GM10248 (cell line): ENCODE measurements at regions of chr6 and their contacts with region 1.

Region 1: DNA sequence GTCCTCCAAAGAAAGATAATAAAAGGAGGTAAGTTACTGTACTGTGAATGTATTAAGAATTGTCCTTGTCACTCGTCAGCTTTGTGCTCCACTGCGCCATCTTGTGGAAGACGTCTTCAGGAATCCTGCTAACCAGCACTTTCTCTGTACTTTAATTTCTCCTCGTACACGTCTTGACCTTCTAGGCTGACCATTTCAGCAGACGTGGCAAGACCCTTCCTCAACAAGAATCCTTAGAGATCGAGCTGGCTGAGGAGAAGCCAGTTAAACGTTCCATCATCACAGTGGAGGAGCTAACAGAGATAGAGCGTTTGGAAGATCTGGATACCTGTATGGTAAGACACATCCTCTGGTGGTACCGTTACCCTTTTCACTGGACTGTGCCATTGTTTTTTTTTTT is 95.5 kb upstream of the SCGN start:
- DNase-seq: peak; percentile 56
- CTCF ChIP-seq: peak; percentile 88

Region 2: GRCh38 chr6:25223490-25223991 is 333.0 kb before region 1 on chr6:
- CTCF ChIA-PET with region 1: interaction called, 32 read pairs
- POLR2A ChIA-PET with region 1: no interaction called
- DNase-seq: peak; percentile 62
- CTCF ChIP-seq: peak; percentile 92

Region 3: GRCh38 chr6:25270559-25270958 is 286.0 kb before region 1 on chr6:
- CTCF ChIA-PET with region 1: interaction called, 60 read pairs
- POLR2A ChIA-PET with region 1: no interaction called
- DNase-seq: no peak
- CTCF ChIP-seq: no peak

Region 4: GRCh38 chr6:25278914-25279747 is 277.4 kb before region 1 on chr6 and contains the start of gene CARMIL1:
- CTCF ChIA-PET with region 1: interaction called, 14 read pairs
- POLR2A ChIA-PET with region 1: no interaction called
- DNase-seq: peak; percentile 90
- CTCF ChIP-seq: peak; percentile 62

Region 5: DNA sequence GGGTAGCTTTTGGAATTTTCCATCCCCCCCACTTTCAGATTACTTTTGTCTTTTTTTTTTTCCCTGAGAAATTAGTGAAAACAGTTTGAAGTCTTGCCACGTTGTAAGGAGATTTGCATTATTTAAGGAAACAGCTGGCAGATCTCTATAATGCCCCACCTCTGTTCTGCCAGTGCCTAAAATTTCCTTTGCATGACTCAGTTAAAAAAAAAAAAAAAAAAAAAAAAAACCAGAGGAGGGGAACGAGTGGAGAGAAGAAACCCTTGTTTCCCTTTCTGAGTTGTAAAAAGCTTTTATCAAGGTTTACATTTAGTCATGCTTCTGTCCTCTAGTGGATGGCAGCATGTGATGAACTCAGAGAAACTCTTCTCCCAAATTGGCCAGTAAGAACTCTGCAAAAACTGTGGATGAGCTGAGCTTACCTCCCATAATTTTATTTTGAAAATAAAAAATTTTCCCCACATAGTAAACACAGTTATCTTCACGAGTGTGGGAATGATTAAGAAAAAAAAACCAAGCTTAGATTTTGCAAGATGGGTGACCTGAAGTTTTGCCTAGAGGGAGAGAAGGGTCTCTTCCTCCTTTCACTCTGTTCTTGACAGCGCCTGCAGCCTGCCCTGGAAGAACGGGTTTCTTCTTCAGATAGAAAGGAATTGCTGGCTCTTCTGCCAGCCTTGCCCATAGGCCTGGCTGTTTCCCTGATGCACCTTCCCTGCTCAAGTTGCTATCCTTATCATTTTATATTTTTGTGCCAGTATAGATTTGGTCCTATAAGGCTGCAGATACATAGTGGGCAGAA is 243.6 kb before region 1 on chr6:
- CTCF ChIA-PET with region 1: no interaction called
- POLR2A ChIA-PET with region 1: no interaction called
- DNase-seq: no peak
- CTCF ChIP-seq: no peak

Region 6: DNA sequence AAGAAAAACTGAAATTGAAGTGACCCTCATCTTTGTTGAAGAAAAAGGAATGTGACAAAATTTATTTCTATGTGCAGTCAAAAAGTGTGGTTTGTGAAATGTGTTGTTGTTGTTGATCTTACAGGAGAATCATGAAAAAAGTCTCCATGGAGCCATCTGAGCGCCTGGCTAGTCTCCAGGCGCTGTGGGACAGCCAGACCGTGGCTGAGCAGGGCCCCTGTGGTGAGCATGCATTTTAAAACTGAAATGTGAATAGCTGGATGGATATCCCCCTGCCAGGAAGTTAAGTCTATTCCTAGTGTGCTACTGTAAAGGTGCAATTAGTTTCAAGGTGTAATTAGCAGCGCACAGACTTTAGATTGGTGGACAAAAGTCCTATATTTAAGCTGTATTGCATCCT is 106.7 kb before region 1 on chr6:
- CTCF ChIA-PET with region 1: no interaction called
- POLR2A ChIA-PET with region 1: no interaction called
- DNase-seq: no peak
- CTCF ChIP-seq: no peak

Region 7: DNA sequence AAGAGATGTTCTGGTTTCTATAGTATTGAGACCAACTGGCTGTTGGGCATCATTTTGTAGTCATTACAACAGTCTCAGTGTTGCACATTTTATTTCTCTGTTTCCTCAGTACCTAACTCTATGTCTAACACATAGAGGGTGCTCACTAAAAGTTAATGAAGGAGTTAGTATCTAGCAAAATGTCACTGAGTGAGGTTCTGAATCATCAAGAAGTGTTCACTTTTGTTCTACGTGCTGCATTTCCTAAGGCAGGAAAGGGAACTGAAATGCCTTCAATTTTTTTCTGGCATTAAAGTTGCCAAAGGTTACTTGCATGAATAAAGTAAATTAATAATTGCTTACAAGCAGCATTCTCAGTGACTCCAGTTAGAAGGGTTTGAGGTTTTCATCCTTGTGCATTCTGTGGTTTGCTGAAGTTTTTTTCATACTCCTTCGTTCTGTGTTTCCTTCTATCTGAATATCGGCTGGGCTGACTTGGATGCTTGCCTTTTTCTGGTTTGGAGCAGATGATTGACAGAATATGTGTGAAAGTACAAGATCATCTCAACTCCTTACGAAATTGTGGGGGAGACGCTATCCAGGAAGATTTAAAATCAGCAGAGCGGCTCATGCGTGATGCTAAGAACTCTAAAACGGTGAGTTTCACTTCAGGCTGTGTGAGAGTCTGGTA is 19.0 kb before region 1 on chr6:
- CTCF ChIA-PET with region 1: interaction called, 22 read pairs
- POLR2A ChIA-PET with region 1: interaction called, 3 read pairs
- DNase-seq: no peak
- CTCF ChIP-seq: no peak

Region 8: GRCh38 chr6:25583099-25583498 is 26.6 kb after region 1 on chr6:
- CTCF ChIA-PET with region 1: interaction called, 26 read pairs
- POLR2A ChIA-PET with region 1: no interaction called
- DNase-seq: no peak
- CTCF ChIP-seq: no peak